Dorsolateral prefrontal cortex (tissue), 120 donors: ENCODE measurements at regions of chr10 and their contacts with region 1.

Region 1: GRCh38 chr10:80154975-80155695 is 22.6 kb downstream of the PLAC9 start:
- DNase-seq: peak in 6 of 10 donors; percentile 48 to 77 (median 64)
- H3K4me3 ChIP-seq: no peak overlapping the region
- H3K27ac ChIP-seq: peak overlapping the region in 57 of 59 donors; percentile 8 to 96 (median 77)
- H3K27me3 ChIP-seq: no peaks in the 10 kb centered on the region
- CTCF ChIP-seq: no peak

Region 2: GRCh38 chr10:80172896-80173295 is 17.8 kb after region 1 on chr10:
- intact Hi-C with region 1: loop called in 1 of 2 experiments (anchors 1 kb)
- DNase-seq: peak in 1 of 10 donors; percentile 24
- H3K4me3 ChIP-seq: no peak overlapping the region
- H3K27ac ChIP-seq: peak overlapping the region in 5 of 59 donors; percentile 0 to 29 (median 4)
- H3K27me3 ChIP-seq: no peaks in the 10 kb centered on the region
- CTCF ChIP-seq: no peak

Region 3: DNA sequence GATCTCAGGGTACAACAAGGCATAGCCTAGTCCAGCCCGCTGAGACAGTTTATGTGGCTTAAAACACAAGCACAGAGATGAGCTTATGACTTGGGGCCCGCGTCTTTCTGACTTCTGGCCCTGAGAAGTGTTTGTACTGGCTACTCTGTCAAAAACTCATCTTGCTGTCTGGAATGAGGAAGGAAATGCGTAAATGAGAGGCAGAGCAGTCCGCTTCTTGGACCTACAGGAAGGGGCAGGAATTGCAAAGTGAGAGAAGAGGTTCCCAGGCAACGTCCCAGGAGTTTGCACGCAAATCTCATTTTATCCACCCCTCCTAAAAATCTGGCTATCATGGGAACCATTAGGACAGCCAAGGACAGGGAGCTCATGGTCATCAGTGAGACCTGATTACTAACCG is 44.7 kb after region 1 on chr10:
- intact Hi-C with region 1: loop called (anchors 2 to 5 kb)
- DNase-seq: no peak
- H3K4me3 ChIP-seq: peak overlapping the region in 9 of 59 donors; percentile 7 to 34 (median 19)
- H3K27ac ChIP-seq: peak overlapping the region in 50 of 59 donors; percentile 0 to 95 (median 74)
- H3K27me3 ChIP-seq: no peaks in the 10 kb centered on the region
- CTCF ChIP-seq: peak in 7 of 56 donors; percentile 8 to 23 (median 9)